Esophagus squamous epithelium (tissue), 5 donors: ENCODE measurements at regions of chr19 and their contacts with region 1.

Region 1: GRCh38 chr19:4732680-4733114 is 9.1 kb upstream of the DPP9 start:
- DNase-seq: no peak
- H3K4me3 ChIP-seq: peak overlapping the region in 1 of 4 donors; percentile 18
- H3K27ac ChIP-seq: no peak overlapping the region
- H3K4me1 ChIP-seq: peaks cover 0 to 12% (median 0%) of the 10 kb centered on the region in 3 donors
- H3K27me3 ChIP-seq: peaks cover 0 to 16% (median 0%) of the 10 kb centered on the region in 4 donors
- CTCF ChIP-seq: peak; percentile 51 to 72 (median 62)
- POLR2A ChIP-seq: no peak

Region 2: DNA sequence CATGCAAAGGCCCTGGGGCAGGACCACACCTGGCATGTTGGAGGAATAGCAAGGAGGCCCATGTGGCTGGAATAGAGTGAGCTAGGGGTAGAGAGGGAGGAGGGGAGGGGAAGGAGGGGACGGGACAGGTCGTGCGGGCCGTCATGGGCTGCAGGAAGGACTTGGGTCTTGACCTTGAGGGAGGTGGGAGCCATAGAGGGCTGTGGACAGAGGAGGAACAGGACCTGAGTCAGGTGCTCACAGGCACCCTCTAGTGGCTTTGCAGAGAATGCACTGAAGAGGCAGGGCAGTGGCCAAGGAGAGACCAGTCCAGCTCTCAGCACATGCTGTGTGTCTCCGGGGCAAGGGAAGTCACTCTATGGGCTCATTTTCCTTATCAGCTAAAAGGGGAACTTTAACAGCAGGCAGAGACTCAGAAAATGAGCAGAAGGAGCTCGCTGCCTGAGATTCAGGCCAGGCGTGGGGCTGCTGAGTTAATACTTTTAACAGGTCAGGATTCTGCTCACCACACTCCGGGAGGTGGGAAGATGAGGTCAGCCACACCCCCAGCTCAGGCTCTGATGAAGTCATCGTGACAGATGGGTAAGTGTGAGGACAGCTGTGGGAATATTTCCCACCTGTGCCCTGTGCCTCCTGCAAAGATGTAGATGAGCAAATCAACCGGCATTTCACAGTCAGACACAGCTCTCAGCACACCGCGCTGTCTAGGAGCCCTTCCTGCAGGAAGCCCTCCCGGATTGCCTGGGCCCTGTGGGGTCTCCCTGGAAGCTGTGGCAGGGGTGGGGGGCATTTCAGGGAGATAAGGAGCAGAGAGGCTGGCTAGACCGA is 99.3 kb before region 1 on chr19:
- intact Hi-C with region 1: no loop called
- DNase-seq: no peak
- H3K4me3 ChIP-seq: no peak overlapping the region
- H3K27ac ChIP-seq: no peak overlapping the region
- H3K4me1 ChIP-seq: peaks cover 6 to 36% (median 19%) of the 10 kb centered on the region in 3 donors
- H3K27me3 ChIP-seq: peaks cover 0 to 27% (median 0%) of the 10 kb centered on the region in 4 donors
- CTCF ChIP-seq: peak in 5 of 6 experiments; percentile 49 to 72 (median 64)
- POLR2A ChIP-seq: peak in 1 of 4 donors; percentile 9

Region 3: DNA sequence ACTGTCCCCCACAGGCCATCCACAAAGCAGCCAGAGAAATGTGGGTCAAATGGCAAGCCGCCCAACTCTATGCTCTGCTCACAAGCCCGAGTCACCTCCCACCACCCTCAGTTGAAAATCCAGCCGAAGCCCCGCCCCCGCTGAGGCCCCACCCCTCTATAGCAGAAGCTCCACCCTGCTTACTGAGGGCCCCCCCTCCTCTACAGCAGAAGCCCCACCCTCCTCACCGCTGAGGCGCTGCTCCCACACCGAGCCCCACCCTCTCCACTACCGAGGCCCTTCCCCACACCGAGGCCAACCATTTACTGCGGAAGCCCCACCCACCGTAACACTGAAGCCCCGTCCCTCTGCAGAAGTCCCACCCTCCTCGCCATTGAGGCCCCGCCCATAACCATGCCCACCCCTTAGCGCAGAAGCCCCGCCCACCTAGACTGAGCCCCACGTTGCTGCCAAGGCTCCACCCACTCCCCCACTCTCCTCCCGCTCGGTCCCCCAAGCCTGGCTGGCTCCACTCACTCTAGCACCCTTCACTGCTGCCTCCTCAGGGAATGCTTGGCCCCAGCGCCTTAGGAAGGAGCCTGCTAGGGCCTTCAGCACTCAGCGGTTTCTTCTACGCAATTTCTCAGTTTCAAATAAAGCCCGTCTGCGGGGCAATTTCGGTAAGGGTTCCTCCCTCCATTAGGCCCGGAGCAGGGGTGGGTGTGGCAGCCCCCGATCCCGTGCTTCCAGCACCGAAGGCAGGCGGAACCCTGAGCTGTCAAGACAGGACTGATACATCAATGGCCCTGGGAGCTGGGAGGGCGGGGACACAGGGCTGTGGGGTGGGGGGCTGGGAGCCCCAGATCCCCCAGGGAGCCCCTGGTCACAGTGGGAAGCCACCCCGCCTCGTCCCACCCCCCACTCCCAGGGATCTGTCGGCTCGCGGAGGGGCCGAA is 53.5 kb before region 1 on chr19:
- intact Hi-C with region 1: no loop called
- DNase-seq: no peak
- H3K4me3 ChIP-seq: no peak overlapping the region
- H3K27ac ChIP-seq: peak overlapping the region in 1 of 4 donors; percentile 9
- H3K4me1 ChIP-seq: peaks cover 0 to 10% (median 0%) of the 10 kb centered on the region in 3 donors
- H3K27me3 ChIP-seq: no peaks in the 10 kb centered on the region
- CTCF ChIP-seq: no peak
- POLR2A ChIP-seq: no peak

Region 4: GRCh38 chr19:4791170-4792018 is 58.7 kb after region 1 on chr19 and contains the start of gene FEM1A:
- intact Hi-C with region 1: loop called (anchors 5 kb)
- DNase-seq: peak; percentile 97
- H3K4me3 ChIP-seq: peak within 1 kb of the TSS; percentile 86 to 99 (median 91)
- H3K27ac ChIP-seq: peak within 1 kb of the TSS; percentile 94 to 99 (median 96)
- H3K4me1 ChIP-seq: peaks cover 28 to 50% (median 40%) of the 10 kb centered on the region in 3 donors
- H3K27me3 ChIP-seq: no peaks in the 10 kb centered on the region
- CTCF ChIP-seq: peak; percentile 98 to 100 (median 99)
- POLR2A ChIP-seq: peak in 3 of 4 donors; percentile 48 to 83 (median 66)
- total RNA-seq, gene FEM1A: 16.8 to 22.7 (median 18.4) TPM